Right ventricle myocardium inferior (tissue), 1 donor: ENCODE measurements at regions of chr19 and their contacts with region 1.

Region 1: DNA sequence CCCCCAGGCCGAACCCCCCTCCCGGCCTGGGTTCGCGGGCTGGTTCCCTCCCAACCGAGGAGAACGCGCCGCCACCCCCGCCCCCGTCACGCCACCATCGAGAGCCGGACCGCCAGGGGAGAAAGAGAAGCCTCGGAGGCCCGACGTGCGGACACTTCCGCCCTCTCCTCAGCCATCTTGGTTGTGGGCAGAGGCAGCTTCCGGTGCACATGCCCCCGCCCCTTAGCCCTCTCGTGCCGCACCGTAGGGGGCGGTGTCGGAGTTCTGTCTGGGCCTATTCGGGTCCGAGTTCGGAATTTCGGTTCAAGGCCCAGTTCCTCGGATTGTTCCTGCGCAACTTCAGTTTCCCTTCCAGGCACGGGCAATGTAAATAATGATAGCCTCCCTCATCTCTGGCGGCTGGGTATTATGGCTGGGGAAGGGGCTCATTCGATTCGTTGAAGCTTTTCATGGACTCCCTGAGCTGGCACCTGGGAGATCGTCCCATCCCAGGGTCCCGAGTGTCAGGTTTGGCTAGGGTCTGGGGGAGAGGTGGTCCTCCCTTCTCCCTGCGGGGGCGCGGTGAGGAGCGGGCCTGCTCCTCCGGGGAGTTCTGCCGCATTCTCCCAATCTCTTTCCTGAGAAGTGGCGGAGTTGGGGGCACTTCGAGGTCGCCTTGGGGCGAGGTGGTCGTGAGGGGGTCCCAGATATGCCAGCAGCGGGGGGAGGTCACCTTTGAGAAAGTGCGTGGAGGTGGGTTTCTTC is at the starts of genes IER2 and STX10:
- DNase-seq: peak; percentile 98
- ATAC-seq: peak; percentile 76
- total RNA-seq, gene IER2: 18.8 TPM
- total RNA-seq, gene STX10: 34.5 TPM

Region 2: GRCh38 chr19:13117772-13118423 is 32.5 kb before region 1 on chr19 and contains the start of gene NACC1:
- intact Hi-C with region 1: loop called (anchors 2 kb)
- DNase-seq: peak; percentile 95
- ATAC-seq: peak; percentile 95
- total RNA-seq, gene NACC1: 54.0 TPM

Region 3: GRCh38 chr19:13207846-13208671 is 57.7 kb after region 1 on chr19:
- intact Hi-C with region 1: no loop called
- DNase-seq: peak; percentile 67
- ATAC-seq: peak; percentile 18

Region 4: GRCh38 chr19:13846557-13847406 is 696.4 kb after region 1 on chr19:
- intact Hi-C with region 1: loop called (anchors 10 kb)
- DNase-seq: peak; percentile 97
- ATAC-seq: peak; percentile 55